ENCODE measurements at regions of chr11 and their contacts with region 1.

Region 1: DNA sequence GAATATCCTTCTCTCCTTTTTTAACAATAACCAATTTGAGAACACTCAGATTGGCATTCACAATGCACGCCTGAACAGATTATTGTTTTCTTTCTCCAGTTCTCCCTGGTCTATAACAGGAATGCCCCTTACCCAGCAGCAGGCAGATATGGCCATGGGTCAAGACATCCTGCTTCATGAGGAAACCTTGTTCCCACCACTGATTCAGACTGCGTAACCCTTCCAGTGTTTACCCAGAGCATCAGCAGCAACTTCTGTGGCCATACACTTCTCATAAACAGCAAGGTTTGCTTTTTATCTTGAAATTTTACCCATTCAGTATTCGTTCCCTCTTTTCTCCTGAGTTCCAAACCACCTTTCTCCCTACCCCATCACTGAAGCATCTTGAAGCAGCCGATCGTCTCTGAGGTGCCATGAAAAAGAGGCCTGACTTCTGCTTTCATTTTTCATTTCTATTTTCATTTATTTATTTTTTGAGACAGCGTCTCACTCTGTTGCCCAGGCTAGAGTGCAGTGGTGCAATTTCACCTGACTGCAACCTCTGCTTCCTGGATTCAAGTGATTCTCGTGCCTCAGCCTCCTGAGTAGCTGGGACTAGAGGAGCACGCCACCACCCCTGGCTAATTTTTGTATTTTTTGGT is 9.6 kb downstream of the PTS start:
- DNase-seq: no peak
- ATAC-seq: no peak
- H3K4me3 ChIP-seq: no peak overlapping the region
- H3K27ac ChIP-seq: no peak overlapping the region
- H3K4me1 ChIP-seq: no peaks in the 10 kb centered on the region
- H3K27me3 ChIP-seq: no peaks in the 10 kb centered on the region

Region 2: GRCh38 chr11:112270551-112271174 is 34.8 kb after region 1 on chr11:
- intact Hi-C with region 1: loop called in 1 of 4 experiments (anchors 5 kb)
- DNase-seq: no peak
- ATAC-seq: no peak
- H3K4me3 ChIP-seq: no peak overlapping the region
- H3K27ac ChIP-seq: no peak overlapping the region
- H3K4me1 ChIP-seq: no peaks in the 10 kb centered on the region
- H3K27me3 ChIP-seq: no peaks in the 10 kb centered on the region

Measured in right cardiac atrium (tissue), 5 donors.